OCI-LY7 (cell line): ENCODE measurements at regions of chr1 and their contacts with region 1.

Region 1: GRCh38 chr1:93708734-93709481 is 27.3 kb upstream of the BCAR3 start:
- DNase-seq: peak; percentile 62
- H3K4me3 ChIP-seq: peak overlapping the region; percentile 51
- H3K27ac ChIP-seq: peak overlapping the region; percentile 98
- H3K4me1 ChIP-seq: peaks cover 95% of the 10 kb centered on the region
- CTCF ChIP-seq: no peak

Region 2: GRCh38 chr1:93692983-93693591 is 15.8 kb before region 1 on chr1:
- CTCF ChIA-PET with region 1: interaction called, 12 read pairs
- POLR2A ChIA-PET with region 1: interaction called, 497 read pairs
- intact Hi-C with region 1: loop called (anchors 2 kb)
- DNase-seq: peak; percentile 65
- H3K4me3 ChIP-seq: peak overlapping the region; percentile 7
- H3K27ac ChIP-seq: peak overlapping the region; percentile 80
- H3K4me1 ChIP-seq: peaks cover 84% of the 10 kb centered on the region
- CTCF ChIP-seq: no peak

Region 3: DNA sequence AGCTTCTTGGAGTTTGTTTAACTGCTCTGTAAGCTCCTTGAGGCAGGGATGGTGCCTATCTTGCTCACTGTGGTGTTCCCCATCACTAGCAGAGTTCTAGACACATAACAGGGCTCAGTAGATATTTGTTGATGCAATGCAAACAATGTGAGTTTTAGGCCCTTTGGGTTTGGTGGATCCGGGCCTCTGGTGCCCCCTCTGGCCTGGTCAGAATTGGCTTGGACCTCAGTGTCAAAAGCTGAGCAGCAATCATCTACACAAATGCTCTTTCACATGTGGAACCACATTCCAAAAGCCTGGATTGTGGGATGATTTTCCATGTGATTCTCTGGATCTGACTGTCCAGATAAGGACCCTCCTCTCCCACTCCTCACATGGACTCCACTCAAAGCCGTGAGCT is 26.1 kb after region 1 on chr1:
- CTCF ChIA-PET with region 1: no interaction called
- POLR2A ChIA-PET with region 1: interaction called, 5 read pairs
- intact Hi-C with region 1: loop called (anchors 1 kb)
- DNase-seq: peak; percentile 45
- H3K4me3 ChIP-seq: no peak overlapping the region
- H3K27ac ChIP-seq: no peak overlapping the region
- H3K4me1 ChIP-seq: peaks cover 34% of the 10 kb centered on the region
- CTCF ChIP-seq: peak; percentile 76